Caco-2 (cell line): ENCODE measurements at regions of chr6 and their contacts with region 1.

Region 1: DNA sequence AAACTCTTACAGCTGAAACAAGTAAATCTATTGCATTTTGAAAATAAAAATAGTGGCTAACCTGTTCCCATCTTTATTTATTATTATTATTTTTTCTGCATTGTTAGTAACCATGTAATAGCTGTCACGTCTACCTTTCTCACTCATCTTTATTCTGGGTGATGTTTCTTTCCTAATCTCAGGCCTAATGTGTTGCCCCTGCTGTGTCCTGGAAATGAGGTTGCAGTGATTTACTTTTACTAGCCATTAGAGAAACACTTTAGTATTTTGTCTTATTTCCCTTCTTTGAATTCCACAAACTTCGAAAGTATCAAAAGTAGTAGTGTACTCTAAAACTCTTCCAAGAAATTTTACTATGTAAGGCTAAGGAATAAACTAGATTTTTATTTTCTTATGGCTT is 546.9 kb downstream of the GRIK2 start:
- DNase-seq: no peak
- H3K4me3 ChIP-seq: no peak overlapping the region
- H3K4me3 Mint-ChIP-seq: no peak overlapping the region
- H3K27ac Mint-ChIP-seq: no peak overlapping the region
- H3K4me1 ChIP-seq: no peaks in the 10 kb centered on the region
- H3K4me1 Mint-ChIP-seq: no peaks in the 10 kb centered on the region
- H3K27me3 ChIP-seq: no peaks in the 10 kb centered on the region
- H3K27me3 Mint-ChIP-seq: no peaks in the 10 kb centered on the region
- CTCF ChIP-seq: no peak

Region 2: GRCh38 chr6:102015431-102015830 is 75.0 kb after region 1 on chr6:
- CTCF ChIA-PET with region 1: no interaction called
- POLR2A ChIA-PET with region 1: no interaction called
- intact Hi-C with region 1: loop called (anchors 5 kb)
- DNase-seq: peak in 1 of 2 experiments; percentile 17
- H3K4me3 ChIP-seq: no peak overlapping the region
- H3K4me3 Mint-ChIP-seq: no peak overlapping the region
- H3K27ac Mint-ChIP-seq: no peak overlapping the region
- H3K4me1 ChIP-seq: no peaks in the 10 kb centered on the region
- H3K4me1 Mint-ChIP-seq: no peaks in the 10 kb centered on the region
- H3K27me3 ChIP-seq: no peaks in the 10 kb centered on the region
- H3K27me3 Mint-ChIP-seq: no peaks in the 10 kb centered on the region
- CTCF ChIP-seq: no peak